ENCODE measurements at regions of chr14 and their contacts with region 1.

Region 1: GRCh38 chr14:51873221-51873893 is 12.9 kb downstream of the GNG2 start:
- DNase-seq: peak; percentile 79
- H3K4me3 Mint-ChIP-seq: peak overlapping the region; percentile 53
- H3K27ac Mint-ChIP-seq: peak overlapping the region; percentile 91
- H3K4me1 Mint-ChIP-seq: peaks cover 51% of the 10 kb centered on the region
- H3K27me3 Mint-ChIP-seq: no peaks in the 10 kb centered on the region

Region 2: GRCh38 chr14:51828017-51828797 is 45.1 kb before region 1 on chr14:
- intact Hi-C with region 1: loop called (anchors 2 kb)
- DNase-seq: peak; percentile 88
- H3K4me3 Mint-ChIP-seq: peak overlapping the region; percentile 48
- H3K27ac Mint-ChIP-seq: peak overlapping the region; percentile 18
- H3K4me1 Mint-ChIP-seq: peaks cover 3% of the 10 kb centered on the region
- H3K27me3 Mint-ChIP-seq: peaks cover 5% of the 10 kb centered on the region

Region 3: DNA sequence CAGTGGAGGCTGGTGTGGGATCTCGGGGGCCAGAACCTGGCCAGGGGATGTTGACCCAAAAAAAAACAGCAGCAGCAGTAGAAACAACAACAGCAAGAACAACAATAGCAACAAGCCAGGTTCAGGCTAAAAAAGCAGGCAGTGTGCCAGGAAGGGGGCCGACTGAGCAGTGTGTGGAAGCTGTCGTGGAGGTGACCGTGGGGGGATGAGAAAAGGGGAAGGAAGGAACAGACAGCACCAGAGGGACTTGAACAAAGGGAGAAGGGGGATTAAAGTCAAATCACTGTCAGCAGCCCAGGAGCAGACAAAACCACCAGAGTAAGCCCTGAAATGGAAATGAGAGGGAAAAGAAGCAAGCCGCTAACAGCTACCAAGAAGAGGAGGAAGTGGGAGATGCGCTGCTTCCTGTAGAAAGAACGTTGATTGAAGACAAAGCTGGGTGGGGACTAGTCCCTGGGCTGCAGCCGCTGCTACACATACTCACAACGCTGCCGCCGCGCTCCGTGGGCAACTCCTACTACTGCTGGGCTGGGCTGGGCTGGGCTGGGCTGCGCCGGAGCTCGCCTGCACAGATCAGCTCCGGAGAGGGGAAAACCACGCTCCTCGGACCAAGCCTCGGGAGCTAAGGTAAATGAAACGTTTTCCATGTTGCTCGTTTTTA is 13.1 kb before region 1 on chr14 and contains the start of gene GNG2:
- intact Hi-C with region 1: loop called (anchors 1 kb)
- DNase-seq: peak; percentile 95
- H3K4me3 Mint-ChIP-seq: peak within 1 kb of the TSS; percentile 99
- H3K27ac Mint-ChIP-seq: peak within 1 kb of the TSS; percentile 92
- H3K4me1 Mint-ChIP-seq: peaks cover 51% of the 10 kb centered on the region
- H3K27me3 Mint-ChIP-seq: no peaks in the 10 kb centered on the region
- total RNA-seq, gene GNG2: 104 and 105 TPM in 2 replicates

Region 4: GRCh38 chr14:51884086-51884927 is 10.9 kb after region 1 on chr14:
- intact Hi-C with region 1: loop called (anchors 1 kb)
- DNase-seq: peak; percentile 58
- H3K4me3 Mint-ChIP-seq: peak overlapping the region; percentile 51
- H3K27ac Mint-ChIP-seq: peak overlapping the region; percentile 46
- H3K4me1 Mint-ChIP-seq: peaks cover 37% of the 10 kb centered on the region
- H3K27me3 Mint-ChIP-seq: no peaks in the 10 kb centered on the region